CD8-positive, alpha-beta T cell (primary cell): ENCODE measurements at regions of chr18 and their contacts with region 1.

Region 1: GRCh38 chr18:63216516-63217311 is 102.9 kb downstream of the BCL2 start:
- DNase-seq: peak in 4 of 9 experiments; percentile 35 to 60 (median 44)
- ATAC-seq: peak; percentile 69
- H3K4me3 ChIP-seq: peak overlapping the region; percentile 3 to 12
- H3K4me3 Mint-ChIP-seq: peak overlapping the region; percentile 77
- H3K27ac ChIP-seq: peak overlapping the region; percentile 43 to 66
- H3K27ac Mint-ChIP-seq: peak overlapping the region; percentile 95
- H3K4me1 ChIP-seq: peaks cover 86% of the 10 kb centered on the region
- H3K4me1 Mint-ChIP-seq: peaks cover 93% of the 10 kb centered on the region
- H3K27me3 ChIP-seq: no peaks in the 10 kb centered on the region
- H3K27me3 Mint-ChIP-seq: no peaks in the 10 kb centered on the region
- CTCF ChIP-seq: no peak

Region 2: DNA sequence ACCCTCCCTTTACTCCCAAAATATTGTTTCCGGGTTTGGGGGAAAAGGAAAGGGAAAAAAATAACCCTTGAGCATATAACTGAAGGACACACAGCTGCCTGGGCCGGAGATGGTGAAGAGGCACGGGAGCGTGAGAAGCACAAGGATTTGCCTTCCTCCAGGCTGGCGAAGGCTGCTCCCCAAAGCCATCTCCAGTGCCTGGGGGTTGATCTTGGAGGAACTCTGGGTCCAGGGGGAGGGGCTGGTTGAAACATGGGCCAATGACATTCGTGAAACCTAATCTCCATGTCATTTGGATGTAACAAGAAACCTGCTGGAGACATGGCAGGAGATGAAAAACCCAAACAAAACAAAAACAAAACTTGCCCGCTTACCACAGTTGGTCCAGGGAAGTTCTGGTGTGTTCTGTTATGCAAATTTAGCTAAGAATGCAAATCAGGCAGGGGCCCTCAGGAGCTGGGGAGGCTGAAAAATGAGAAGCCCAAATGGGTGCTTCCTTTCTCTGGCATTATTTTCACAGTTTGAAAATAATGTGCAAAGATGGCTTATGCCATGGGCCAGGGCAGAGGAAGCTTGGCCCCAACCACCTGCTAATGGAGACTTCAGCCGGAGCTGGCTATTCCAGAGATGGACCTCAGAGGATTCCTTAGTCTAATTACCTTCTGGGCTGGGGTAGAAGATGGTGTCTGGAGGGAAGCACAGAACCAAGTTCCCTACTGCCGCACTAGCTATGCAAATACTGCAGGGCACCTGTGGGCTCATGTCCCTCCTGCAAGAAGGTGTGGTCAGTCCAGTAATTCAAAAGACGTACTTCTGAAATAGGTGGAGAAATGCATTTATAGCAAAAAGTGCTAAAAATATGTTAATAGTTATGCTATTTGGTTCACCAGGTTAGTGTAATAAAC is 78.0 kb before region 1 on chr18:
- CTCF ChIA-PET with region 1: no interaction called
- POLR2A ChIA-PET with region 1: no interaction called
- intact Hi-C with region 1: no loop called
- DNase-seq: peak in 1 of 9 experiments; percentile 15
- ATAC-seq: peak; percentile 14
- H3K4me3 ChIP-seq: peak overlapping the region; percentile 29 to 35
- H3K4me3 Mint-ChIP-seq: peak overlapping the region; percentile 88
- H3K27ac ChIP-seq: peak overlapping the region; percentile 4 to 56
- H3K27ac Mint-ChIP-seq: peak overlapping the region; percentile 93
- H3K4me1 ChIP-seq: peaks cover 46% of the 10 kb centered on the region
- H3K4me1 Mint-ChIP-seq: peaks cover 50% of the 10 kb centered on the region
- H3K27me3 ChIP-seq: no peaks in the 10 kb centered on the region
- H3K27me3 Mint-ChIP-seq: no peaks in the 10 kb centered on the region
- CTCF ChIP-seq: no peak

Region 3: DNA sequence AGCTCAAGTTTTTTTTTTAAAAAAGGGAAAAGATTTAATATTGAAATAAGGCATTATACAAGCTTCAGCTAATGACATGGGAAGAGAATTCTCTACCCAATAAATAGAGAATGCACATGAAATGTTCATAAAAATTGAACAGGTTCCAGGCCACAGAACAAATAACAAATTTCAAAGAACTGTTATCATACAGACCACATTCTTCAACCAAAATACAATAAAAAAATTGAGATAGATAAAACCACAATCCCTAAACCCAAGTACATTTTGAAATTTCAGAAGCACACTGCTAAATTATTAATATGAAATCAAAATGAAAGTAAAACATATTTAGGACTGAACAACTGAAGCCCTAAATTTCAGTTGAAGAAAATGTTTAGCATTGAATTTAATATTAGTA is 13.3 kb after region 1 on chr18:
- CTCF ChIA-PET with region 1: no interaction called
- POLR2A ChIA-PET with region 1: interaction called, 3 read pairs
- intact Hi-C with region 1: loop called in 1 of 2 experiments (anchors 1 kb)
- DNase-seq: no peak
- ATAC-seq: no peak
- H3K4me3 ChIP-seq: peak overlapping the region in 1 of 2 experiments; percentile 10
- H3K4me3 Mint-ChIP-seq: peak overlapping the region; percentile 69
- H3K27ac ChIP-seq: peak overlapping the region; percentile 16 to 56
- H3K27ac Mint-ChIP-seq: peak overlapping the region; percentile 89
- H3K4me1 ChIP-seq: peaks cover 73% of the 10 kb centered on the region
- H3K4me1 Mint-ChIP-seq: peaks cover 74% of the 10 kb centered on the region
- H3K27me3 ChIP-seq: no peaks in the 10 kb centered on the region
- H3K27me3 Mint-ChIP-seq: no peaks in the 10 kb centered on the region
- CTCF ChIP-seq: no peak

Region 4: DNA sequence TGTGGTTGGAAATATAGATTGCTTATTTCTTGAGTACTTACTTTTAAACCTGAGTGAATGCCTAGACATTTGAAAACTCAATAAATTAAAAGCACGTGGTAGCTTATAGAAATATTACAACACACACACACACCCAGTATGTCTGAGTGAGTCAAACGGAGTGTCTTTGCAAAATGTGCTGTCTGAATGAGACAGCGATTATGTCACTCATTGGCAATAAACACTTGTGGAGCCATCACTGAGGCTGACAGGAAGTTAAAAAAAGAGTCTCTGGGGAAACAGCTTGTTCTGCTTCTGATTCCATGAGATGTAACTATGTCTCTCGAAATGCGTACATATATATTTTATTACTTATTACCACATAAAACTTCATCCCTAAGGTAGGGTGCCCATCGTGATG is 227.9 kb after region 1 on chr18:
- CTCF ChIA-PET with region 1: no interaction called
- POLR2A ChIA-PET with region 1: no interaction called
- intact Hi-C with region 1: no loop called
- DNase-seq: peak in 1 of 9 experiments; percentile 31
- ATAC-seq: no peak
- H3K4me3 ChIP-seq: no peak overlapping the region
- H3K4me3 Mint-ChIP-seq: no peak overlapping the region
- H3K27ac ChIP-seq: no peak overlapping the region
- H3K27ac Mint-ChIP-seq: no peak overlapping the region
- H3K4me1 ChIP-seq: no peaks in the 10 kb centered on the region
- H3K4me1 Mint-ChIP-seq: no peaks in the 10 kb centered on the region
- H3K27me3 ChIP-seq: no peaks in the 10 kb centered on the region
- H3K27me3 Mint-ChIP-seq: no peaks in the 10 kb centered on the region
- CTCF ChIP-seq: no peak